Activated T-helper 1 cell treated with anti-CD3 and anti-CD28 coated beads, Interleukin-12 subunit alpha, Interleukin-12 subunit beta, Interleukin-2, Interleukin-4 antibody, amounts not matched to agents 30 ng/mL and 10 ng/mL and 1 ng/mL, durations not matched to agents 14 hours and 24 hours and 36 hours (primary cell): ENCODE measurements at regions of chr12 and their contacts with region 1.

Region 1: GRCh38 chr12:6873094-6874014 is at the start of gene SPSB2:
- DNase-seq: peak; percentile 99
- H3K4me3 Mint-ChIP-seq: peak within 1 kb of the TSS; percentile 96
- H3K27ac Mint-ChIP-seq: peak within 1 kb of the TSS; percentile 86
- H3K4me1 Mint-ChIP-seq: peaks cover 56% of the 10 kb centered on the region
- H3K27me3 Mint-ChIP-seq: no peaks in the 10 kb centered on the region
- total RNA-seq, gene SPSB2: 3.4 and 4.7 TPM in 2 replicates

Region 2: DNA sequence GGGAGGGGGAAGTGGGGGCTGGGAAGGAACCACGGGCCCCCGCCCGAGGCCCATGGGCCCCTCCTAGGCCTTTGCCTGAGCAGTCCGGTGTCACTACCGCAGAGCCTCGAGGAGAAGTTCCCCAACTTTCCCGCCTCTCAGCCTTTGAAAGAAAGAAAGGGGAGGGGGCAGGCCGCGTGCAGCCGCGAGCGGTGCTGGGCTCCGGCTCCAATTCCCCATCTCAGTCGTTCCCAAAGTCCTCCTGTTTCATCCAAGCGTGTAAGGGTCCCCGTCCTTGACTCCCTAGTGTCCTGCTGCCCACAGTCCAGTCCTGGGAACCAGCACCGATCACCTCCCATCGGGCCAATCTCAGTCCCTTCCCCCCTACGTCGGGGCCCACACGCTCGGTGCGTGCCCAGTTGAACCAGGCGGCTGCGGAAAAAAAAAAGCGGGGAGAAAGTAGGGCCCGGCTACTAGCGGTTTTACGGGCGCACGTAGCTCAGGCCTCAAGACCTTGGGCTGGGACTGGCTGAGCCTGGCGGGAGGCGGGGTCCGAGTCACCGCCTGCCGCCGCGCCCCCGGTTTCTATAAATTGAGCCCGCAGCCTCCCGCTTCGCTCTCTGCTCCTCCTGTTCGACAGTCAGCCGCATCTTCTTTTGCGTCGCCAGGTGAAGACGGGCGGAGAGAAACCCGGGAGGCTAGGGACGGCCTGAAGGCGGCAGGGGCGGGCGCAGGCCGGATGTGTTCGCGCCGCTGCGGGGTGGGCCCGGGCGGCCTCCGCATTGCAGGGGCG is 339.2 kb before region 1 on chr12 and contains the start of gene GAPDH:
- intact Hi-C with region 1: no loop called
- DNase-seq: peak; percentile 86
- H3K4me3 Mint-ChIP-seq: peak within 1 kb of the TSS; percentile 91
- H3K27ac Mint-ChIP-seq: peak within 1 kb of the TSS; percentile 99
- H3K4me1 Mint-ChIP-seq: peaks cover 58% of the 10 kb centered on the region
- H3K27me3 Mint-ChIP-seq: no peaks in the 10 kb centered on the region
- total RNA-seq, gene GAPDH: 4,315 and 4,318 TPM in 2 replicates

Region 3: DNA sequence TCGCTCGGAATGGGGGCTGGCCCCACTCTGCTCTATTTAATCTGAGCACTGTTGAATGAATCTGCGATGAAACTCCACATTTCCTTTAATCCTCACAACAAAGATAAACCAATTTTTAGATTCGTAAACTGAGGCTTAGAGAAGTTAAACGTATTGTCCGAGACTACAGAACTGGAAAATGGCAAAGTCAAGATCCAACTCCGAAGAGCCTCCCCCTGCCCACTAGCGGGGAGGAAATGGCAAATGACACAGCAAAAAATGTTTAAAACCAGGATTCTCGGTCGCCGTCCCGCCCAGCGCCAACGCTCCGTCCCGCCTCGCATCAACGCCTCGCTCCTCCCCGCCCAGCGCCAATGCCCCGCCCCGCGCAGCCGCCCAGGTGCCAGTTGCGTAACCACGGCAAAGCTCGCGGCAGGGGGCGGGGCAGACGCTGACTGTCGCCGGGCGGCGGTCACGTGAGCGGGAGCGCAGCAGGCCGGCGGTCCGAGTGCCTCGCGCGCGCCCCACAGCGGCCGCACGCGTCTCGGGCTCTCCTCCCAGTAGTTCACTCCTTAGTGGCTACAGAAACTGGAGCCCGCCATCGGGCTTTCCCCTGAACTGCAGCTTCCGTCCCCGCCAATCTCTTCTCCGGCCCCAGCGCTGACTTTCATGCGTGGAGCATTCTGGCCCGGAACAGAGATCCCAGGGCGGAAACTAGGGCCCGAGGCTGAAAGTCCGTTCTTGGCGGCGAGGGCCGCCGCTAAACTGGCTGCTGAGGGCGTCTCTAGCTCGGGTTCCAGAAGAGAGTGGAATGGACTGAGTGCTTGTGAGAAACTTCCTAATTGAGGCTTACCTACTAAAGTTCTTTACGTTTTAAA is 17.7 kb after region 1 on chr12:
- intact Hi-C with region 1: loop called (anchors 1 kb)
- DNase-seq: peak; percentile 98
- H3K4me3 Mint-ChIP-seq: peak overlapping the region; percentile 84
- H3K27ac Mint-ChIP-seq: peak overlapping the region; percentile 95
- H3K4me1 Mint-ChIP-seq: peaks cover 19% of the 10 kb centered on the region
- H3K27me3 Mint-ChIP-seq: no peaks in the 10 kb centered on the region

Region 4: GRCh38 chr12:6914246-6914946 is 41.0 kb after region 1 on chr12 and contains the start of gene ENO2:
- intact Hi-C with region 1: loop called (anchors 2 kb)
- DNase-seq: peak; percentile 77
- H3K4me3 Mint-ChIP-seq: peak within 1 kb of the TSS; percentile 96
- H3K27ac Mint-ChIP-seq: peak within 1 kb of the TSS; percentile 88
- H3K4me1 Mint-ChIP-seq: peaks cover 52% of the 10 kb centered on the region
- H3K27me3 Mint-ChIP-seq: no peaks in the 10 kb centered on the region
- total RNA-seq, gene ENO2: 147 and 156 TPM in 2 replicates

Region 5: GRCh38 chr12:7108796-7109571 is 235.6 kb after region 1 on chr12 and contains the start of gene C1RL:
- intact Hi-C with region 1: loop called (anchors 5 kb)
- DNase-seq: peak; percentile 71
- H3K4me3 Mint-ChIP-seq: peak within 1 kb of the TSS; percentile 94
- H3K27ac Mint-ChIP-seq: peak within 1 kb of the TSS; percentile 91
- H3K4me1 Mint-ChIP-seq: peaks cover 55% of the 10 kb centered on the region
- H3K27me3 Mint-ChIP-seq: no peaks in the 10 kb centered on the region
- total RNA-seq, gene C1RL: 21.5 and 21.8 TPM in 2 replicates

Region 6: GRCh38 chr12:7806863-7807487 is 933.6 kb after region 1 on chr12:
- intact Hi-C with region 1: no loop called
- DNase-seq: peak; percentile 18
- H3K4me3 Mint-ChIP-seq: no peak overlapping the region
- H3K27ac Mint-ChIP-seq: no peak overlapping the region
- H3K4me1 Mint-ChIP-seq: no peaks in the 10 kb centered on the region
- H3K27me3 Mint-ChIP-seq: peaks cover 4% of the 10 kb centered on the region